Panc1 (cell line): ENCODE measurements at regions of chr7 and their contacts with region 1.

Region 1: DNA sequence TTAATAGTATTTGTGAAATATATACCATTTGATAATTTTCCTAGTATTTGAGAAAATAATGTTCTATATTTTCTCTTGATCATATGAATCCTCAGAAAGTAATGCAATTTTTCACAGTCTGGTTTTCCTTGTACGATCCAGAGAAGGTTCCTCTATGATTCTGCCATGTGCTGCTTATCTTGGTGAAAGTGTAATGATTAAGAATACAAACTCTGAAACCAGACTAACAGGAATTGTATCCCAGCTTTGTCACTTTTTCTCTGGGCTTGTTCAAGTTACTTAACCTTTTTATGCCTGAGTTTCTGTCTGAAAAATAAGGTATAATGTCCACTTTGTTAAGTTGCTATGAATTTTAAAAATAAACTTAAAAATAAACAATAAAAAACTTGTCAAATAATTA is 169.6 kb upstream of the ZNF804B start:
- DNase-seq: no peak
- ATAC-seq: no peak
- H3K4me3 ChIP-seq: no peak overlapping the region
- H3K27ac ChIP-seq: no peak overlapping the region
- H3K4me1 ChIP-seq: no peaks in the 10 kb centered on the region
- H3K27me3 ChIP-seq: no peaks in the 10 kb centered on the region
- CTCF ChIP-seq: no peak

Region 2: DNA sequence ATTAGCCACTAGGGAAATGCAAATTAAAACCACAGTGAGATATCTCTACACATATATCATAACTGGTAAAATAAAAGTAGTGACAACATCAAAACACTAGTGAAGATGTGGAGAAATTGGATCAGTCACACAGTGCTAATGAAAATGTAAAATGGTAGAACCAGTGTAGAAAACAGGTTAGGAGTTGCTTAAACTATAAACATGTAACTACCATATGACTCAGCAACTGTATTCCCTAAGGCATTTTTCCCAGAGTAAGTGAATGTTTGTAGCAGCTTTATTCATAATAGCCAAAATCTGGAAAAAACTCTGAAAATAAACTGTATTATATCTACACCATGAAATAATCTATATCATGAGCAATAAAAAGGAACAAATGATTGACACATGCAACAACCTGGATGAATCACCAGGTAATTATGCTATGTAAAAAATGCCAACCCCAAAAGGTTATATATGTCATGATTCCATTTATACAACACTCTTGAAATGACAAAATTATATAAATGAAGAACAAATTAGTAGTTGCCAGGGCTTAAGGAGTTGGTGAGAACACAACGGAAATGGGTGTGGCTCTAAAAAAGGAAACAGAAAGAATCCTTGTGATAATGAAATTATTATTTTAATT is 736.6 kb before region 1 on chr7:
- CTCF ChIA-PET with region 1: no interaction called
- POLR2A ChIA-PET with region 1: interaction called, 10 read pairs
- in situ Hi-C with region 1: no loop called
- intact Hi-C with region 1: no loop called
- DNase-seq: no peak
- ATAC-seq: no peak
- H3K4me3 ChIP-seq: no peak overlapping the region
- H3K27ac ChIP-seq: no peak overlapping the region
- H3K4me1 ChIP-seq: peaks cover 4% of the 10 kb centered on the region; the same call in 1 of the 2 replicates
- H3K27me3 ChIP-seq: no peaks in the 10 kb centered on the region
- CTCF ChIP-seq: no peak